ENCODE measurements at regions of chr20 and their contacts with region 1.

Region 1: DNA sequence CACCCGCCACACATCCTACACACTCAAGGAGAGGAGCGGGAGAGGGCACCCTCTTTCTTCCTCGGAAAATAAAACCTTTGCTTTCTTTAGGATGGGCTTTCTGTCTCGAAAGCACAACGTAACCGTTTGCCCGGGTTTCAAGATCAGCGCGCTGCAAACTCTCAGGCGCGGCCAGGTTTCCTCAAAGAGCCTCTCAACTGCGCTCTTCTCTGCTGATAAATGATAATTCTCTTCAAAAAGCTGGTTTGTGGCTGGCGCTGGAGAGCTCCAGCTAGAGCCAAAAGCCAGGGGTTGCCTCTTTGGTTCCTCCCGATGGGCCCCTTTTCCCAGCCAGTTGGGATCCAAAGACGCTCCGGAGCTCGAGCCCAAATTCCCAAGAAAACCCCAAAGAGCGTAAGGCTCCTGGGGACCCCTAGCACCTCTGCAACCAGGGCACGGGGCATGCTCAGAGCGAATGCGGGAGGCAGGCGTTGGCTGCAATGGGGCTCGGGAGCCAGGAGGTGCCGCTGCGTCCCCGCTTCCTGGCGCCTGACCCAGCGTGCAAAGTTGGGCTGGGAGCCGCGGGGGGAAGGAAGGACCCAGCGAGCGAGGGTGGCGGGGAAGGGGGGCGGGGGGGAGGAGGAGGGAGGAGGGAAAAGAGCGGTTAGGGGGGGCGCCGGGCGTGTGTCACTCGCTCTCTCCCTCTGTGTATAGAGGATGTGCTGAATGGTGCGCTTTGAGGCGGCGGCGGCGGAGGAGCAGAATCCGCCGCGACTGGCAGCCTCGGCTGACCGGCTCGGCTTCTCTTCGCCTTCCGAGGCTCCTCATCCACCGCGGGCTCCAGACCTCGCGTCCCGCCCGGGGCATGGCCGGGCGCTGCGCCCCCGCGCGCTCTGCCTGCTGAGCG is at the start of gene PLCB1:
- DNase-seq: peak; percentile 54 to 91 (median 68)
- ATAC-seq: peak; percentile 91
- H3K4me3 ChIP-seq: peak within 1 kb of the TSS; percentile 64
- H3K4me3 Mint-ChIP-seq: peak within 1 kb of the TSS; percentile 87
- H3K27ac ChIP-seq: no peak within 1 kb of the TSS
- H3K27ac Mint-ChIP-seq: peak within 1 kb of the TSS; percentile 45
- H3K4me1 ChIP-seq: peaks cover 14% of the 10 kb centered on the region
- H3K4me1 Mint-ChIP-seq: peaks cover 30% of the 10 kb centered on the region
- H3K27me3 ChIP-seq: peaks cover 0 to 6% of the 10 kb centered on the region in 2 experiments
- H3K27me3 Mint-ChIP-seq: peaks cover 42% of the 10 kb centered on the region
- CTCF ChIP-seq: peak; percentile 70
- total RNA-seq, gene PLCB1: 3.8 to 5.6 TPM

Region 2: DNA sequence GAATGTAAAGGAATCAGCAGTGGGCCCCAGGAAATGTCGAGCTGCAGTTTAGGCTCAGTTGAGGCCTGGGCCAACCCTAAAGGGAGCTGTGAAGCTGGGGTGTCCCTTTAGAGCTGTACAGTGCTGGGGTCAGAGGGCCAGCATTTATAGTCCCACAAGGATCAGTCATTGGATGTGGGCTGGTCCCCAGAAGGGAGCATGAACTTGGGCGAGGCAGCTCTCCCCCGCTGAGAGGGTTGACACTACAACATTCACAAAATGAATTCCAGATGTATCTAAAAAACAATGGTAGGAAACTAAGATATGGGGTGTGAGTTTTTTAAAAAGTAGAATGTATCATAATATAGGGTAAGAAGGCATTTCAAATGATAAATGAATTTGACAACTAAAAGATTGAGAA is 82.5 kb before region 1 on chr20:
- CTCF ChIA-PET with region 1: no interaction called
- POLR2A ChIA-PET with region 1: no interaction called
- intact Hi-C with region 1: loop called in 1 of 2 experiments (anchors 5 kb)
- DNase-seq: no peak
- ATAC-seq: no peak
- H3K4me3 ChIP-seq: no peak overlapping the region
- H3K4me3 Mint-ChIP-seq: no peak overlapping the region
- H3K27ac ChIP-seq: no peak overlapping the region
- H3K27ac Mint-ChIP-seq: no peak overlapping the region
- H3K4me1 ChIP-seq: no peaks in the 10 kb centered on the region
- H3K4me1 Mint-ChIP-seq: no peaks in the 10 kb centered on the region
- H3K27me3 ChIP-seq: no peaks in the 10 kb centered on the region
- H3K27me3 Mint-ChIP-seq: no peaks in the 10 kb centered on the region
- CTCF ChIP-seq: no peak

Measured in CD4-positive, alpha-beta T cell (primary cell).